SK-N-SH (cell line): ENCODE measurements at regions of chr7 and their contacts with region 1.

Region 1: GRCh38 chr7:50502001-50502684 is 52.0 kb upstream of the FIGNL1 start:
- DNase-seq: no peak
- H3K4me3 ChIP-seq: no peak overlapping the region
- H3K27ac ChIP-seq: peak overlapping the region in 1 of 2 experiments; percentile 100; a peak in 2 of 4 replicates
- H3K4me1 ChIP-seq: peaks cover 0 to 84% of the 10 kb centered on the region in 2 experiments; a peak in 2 of 4 replicates
- H3K27me3 ChIP-seq: peaks cover 11% of the 10 kb centered on the region; the same call in 1 of the 2 replicates
- CTCF ChIP-seq: no peak
- EP300 ChIP-seq: peak in 1 of 2 experiments; percentile 20; a peak in 1 of 4 replicates
- RAD21 ChIP-seq: no peak

Region 2: GRCh38 chr7:50481867-50482266 is 20.3 kb before region 1 on chr7:
- CTCF ChIA-PET with region 1: interaction called, 18 read pairs
- POLR2A ChIA-PET with region 1: interaction called, 6 read pairs
- DNase-seq: no peak
- H3K4me3 ChIP-seq: no peak overlapping the region
- H3K27ac ChIP-seq: peak overlapping the region in 1 of 2 experiments; percentile 58; a peak in 2 of 4 replicates
- H3K4me1 ChIP-seq: peaks cover 0 to 29% of the 10 kb centered on the region in 2 experiments; a peak in 2 of 4 replicates
- H3K27me3 ChIP-seq: 0 out of 2 replicates have a peak, but pooled peaks cover 11% of the 10 kb centered on the region
- CTCF ChIP-seq: peak; percentile 17; the same call in 1 of the 2 replicates
- EP300 ChIP-seq: no peak
- RAD21 ChIP-seq: no peak

Region 3: GRCh38 chr7:50534690-50535290 is 32.6 kb after region 1 on chr7:
- CTCF ChIA-PET with region 1: interaction called, 6 read pairs
- POLR2A ChIA-PET with region 1: interaction called, 20 read pairs
- DNase-seq: peak; percentile 67
- H3K4me3 ChIP-seq: no peak overlapping the region
- H3K27ac ChIP-seq: peak overlapping the region; percentile 85 to 99
- H3K4me1 ChIP-seq: peaks cover 8 to 75% of the 10 kb centered on the region in 2 experiments; a peak in 3 of 4 replicates
- H3K27me3 ChIP-seq: 0 out of 2 replicates have a peak, but pooled peaks cover 7% of the 10 kb centered on the region
- CTCF ChIP-seq: peak; percentile 43
- EP300 ChIP-seq: peak; percentile 54 to 67; a peak in 2 of 4 replicates
- RAD21 ChIP-seq: peak; percentile 53

Region 4: DNA sequence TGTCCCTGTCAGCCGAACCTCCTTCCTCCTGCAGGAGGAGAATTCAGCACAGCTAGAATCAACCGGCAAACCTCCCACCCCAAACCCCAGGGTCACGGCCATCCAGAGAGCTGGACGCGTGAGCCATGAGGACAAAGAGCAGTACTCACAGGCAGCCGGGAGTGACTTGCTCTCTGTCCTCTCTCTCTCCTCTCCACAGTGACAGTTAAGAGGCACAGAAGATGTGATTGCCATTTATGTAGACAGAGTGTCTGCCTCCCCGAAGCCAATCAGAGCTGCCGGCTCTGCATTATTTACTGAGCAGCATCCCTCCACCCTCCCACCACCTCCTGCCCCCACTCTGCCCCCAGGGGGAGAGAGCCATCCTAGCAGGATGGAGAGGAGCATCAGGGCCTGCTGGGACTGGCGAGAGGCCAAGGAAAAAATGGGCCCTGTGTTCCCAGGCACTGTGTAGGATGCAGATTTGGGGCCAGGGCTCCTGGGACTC is 58.8 kb after region 1 on chr7:
- CTCF ChIA-PET with region 1: interaction called, 6 read pairs
- POLR2A ChIA-PET with region 1: interaction called, 48 read pairs
- DNase-seq: peak; percentile 91
- H3K4me3 ChIP-seq: peak overlapping the region; percentile 28 to 55; a peak in 3 of 4 replicates
- H3K27ac ChIP-seq: peak overlapping the region in 1 of 2 experiments; percentile 99; a peak in 2 of 4 replicates
- H3K4me1 ChIP-seq: peaks cover 0 to 66% of the 10 kb centered on the region in 2 experiments; a peak in 2 of 4 replicates
- H3K27me3 ChIP-seq: peaks cover 60% of the 10 kb centered on the region
- CTCF ChIP-seq: no peak
- EP300 ChIP-seq: peak in 1 of 2 experiments; percentile 85; a peak in 2 of 4 replicates
- RAD21 ChIP-seq: peak; percentile 25